CD4-positive, alpha-beta T cell (primary cell): ENCODE measurements at regions of chr16 and their contacts with region 1.

Region 1: DNA sequence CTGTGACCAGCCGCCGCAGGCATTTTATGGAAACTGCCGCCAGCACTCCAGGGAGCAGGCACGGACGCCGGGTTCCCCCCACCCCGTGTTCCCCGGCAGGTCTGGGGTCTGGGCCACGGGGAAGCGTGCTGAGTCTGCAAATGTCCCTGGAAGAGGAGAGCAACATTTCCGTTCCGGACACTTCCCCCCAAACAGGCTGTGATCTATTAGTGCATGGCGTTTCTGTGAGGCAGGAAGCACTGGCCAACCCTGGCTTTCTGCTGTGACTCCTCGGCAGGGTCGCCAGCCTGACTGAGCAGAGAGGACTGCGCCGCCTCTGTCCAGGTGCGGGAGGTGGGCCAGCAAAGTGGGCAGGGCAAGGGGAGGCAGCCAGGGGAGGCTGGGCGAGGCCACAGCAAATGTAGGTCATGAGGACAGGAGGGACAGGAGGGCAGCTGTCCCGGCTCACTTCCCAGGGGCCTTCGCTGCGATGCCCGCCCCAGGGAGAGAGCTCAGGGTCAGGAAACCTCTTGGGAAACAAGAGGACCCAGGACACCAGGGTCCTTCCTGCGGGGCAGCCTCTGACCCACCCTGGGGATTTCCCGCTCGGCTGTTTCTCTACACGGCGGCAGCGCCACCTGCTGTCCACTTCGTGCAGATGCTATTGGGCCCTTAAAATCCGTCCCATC is 9.5 kb downstream of the FOXF1 start:
- DNase-seq: peak; percentile 22 to 79 (median 38)
- ATAC-seq: peak; percentile 59
- H3K4me3 ChIP-seq: peak overlapping the region; percentile 27
- H3K4me3 Mint-ChIP-seq: no peak overlapping the region
- H3K27ac ChIP-seq: no peak overlapping the region
- H3K27ac Mint-ChIP-seq: no peak overlapping the region
- H3K4me1 ChIP-seq: peaks cover 13% of the 10 kb centered on the region
- H3K4me1 Mint-ChIP-seq: peaks cover 10% of the 10 kb centered on the region
- H3K27me3 ChIP-seq: peaks cover 52 to 64% of the 10 kb centered on the region in 2 experiments
- H3K27me3 Mint-ChIP-seq: peaks cover 54% of the 10 kb centered on the region
- CTCF ChIP-seq: peak; percentile 93

Region 2: GRCh38 chr16:86343027-86343787 is 176.6 kb before region 1 on chr16:
- CTCF ChIA-PET with region 1: no interaction called
- POLR2A ChIA-PET with region 1: no interaction called
- intact Hi-C with region 1: loop called (anchors 1 kb)
- DNase-seq: no peak
- ATAC-seq: no peak
- H3K4me3 ChIP-seq: no peak overlapping the region
- H3K4me3 Mint-ChIP-seq: no peak overlapping the region
- H3K27ac ChIP-seq: no peak overlapping the region
- H3K27ac Mint-ChIP-seq: no peak overlapping the region
- H3K4me1 ChIP-seq: no peaks in the 10 kb centered on the region
- H3K4me1 Mint-ChIP-seq: no peaks in the 10 kb centered on the region
- H3K27me3 ChIP-seq: peaks cover 14 to 21% of the 10 kb centered on the region in 2 experiments
- H3K27me3 Mint-ChIP-seq: peaks cover 76% of the 10 kb centered on the region
- CTCF ChIP-seq: no peak

Region 3: DNA sequence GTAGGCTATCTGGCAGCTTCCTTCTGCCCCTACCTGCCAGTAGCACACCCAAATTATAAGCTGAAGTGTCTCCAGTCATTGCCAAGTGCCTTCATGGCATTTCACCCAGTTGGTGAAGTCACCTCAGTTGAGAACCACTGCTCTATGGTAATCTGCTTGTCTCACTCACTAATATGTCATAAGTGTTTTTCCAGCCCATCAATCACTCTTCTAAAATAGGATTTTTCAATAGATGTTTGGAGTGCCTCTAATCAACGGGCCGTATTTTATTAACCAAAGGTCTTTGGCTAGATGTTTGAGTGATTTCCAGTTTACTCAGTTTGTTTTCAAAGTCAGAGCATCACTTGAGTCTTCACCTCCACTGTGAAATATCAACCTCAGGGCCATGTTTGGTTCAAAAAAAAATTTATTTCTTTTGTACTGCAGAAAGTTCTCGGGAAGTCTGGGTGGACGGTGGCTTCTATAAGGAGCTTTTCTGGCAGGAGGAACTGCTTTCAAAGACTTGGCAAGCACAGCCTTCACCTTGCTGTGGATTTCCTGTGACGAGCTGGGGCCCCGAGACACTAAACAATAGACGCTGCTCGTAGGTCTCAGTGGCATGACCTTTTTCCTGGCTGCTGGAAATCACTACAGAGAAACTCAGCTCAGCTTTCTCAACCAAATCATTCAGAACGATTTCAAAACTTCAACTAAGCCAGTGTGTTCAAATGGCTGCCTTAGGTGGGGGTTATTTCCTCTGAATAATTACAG is 104.6 kb before region 1 on chr16:
- CTCF ChIA-PET with region 1: no interaction called
- POLR2A ChIA-PET with region 1: no interaction called
- intact Hi-C with region 1: no loop called
- DNase-seq: peak in 1 of 14 experiments; percentile 5
- ATAC-seq: no peak
- H3K4me3 ChIP-seq: no peak overlapping the region
- H3K4me3 Mint-ChIP-seq: no peak overlapping the region
- H3K27ac ChIP-seq: no peak overlapping the region
- H3K27ac Mint-ChIP-seq: no peak overlapping the region
- H3K4me1 ChIP-seq: no peaks in the 10 kb centered on the region
- H3K4me1 Mint-ChIP-seq: no peaks in the 10 kb centered on the region
- H3K27me3 ChIP-seq: peaks cover 0 to 5% of the 10 kb centered on the region in 2 experiments
- H3K27me3 Mint-ChIP-seq: peaks cover 13% of the 10 kb centered on the region
- CTCF ChIP-seq: no peak

Region 4: GRCh38 chr16:86491256-86492023 is 28.3 kb before region 1 on chr16:
- CTCF ChIA-PET with region 1: no interaction called
- POLR2A ChIA-PET with region 1: no interaction called
- intact Hi-C with region 1: no loop called
- DNase-seq: no peak
- ATAC-seq: no peak
- H3K4me3 ChIP-seq: no peak overlapping the region
- H3K4me3 Mint-ChIP-seq: no peak overlapping the region
- H3K27ac ChIP-seq: no peak overlapping the region
- H3K27ac Mint-ChIP-seq: no peak overlapping the region
- H3K4me1 ChIP-seq: no peaks in the 10 kb centered on the region
- H3K4me1 Mint-ChIP-seq: no peaks in the 10 kb centered on the region
- H3K27me3 ChIP-seq: peaks cover 29 to 59% of the 10 kb centered on the region in 2 experiments
- H3K27me3 Mint-ChIP-seq: peaks cover 88% of the 10 kb centered on the region
- CTCF ChIP-seq: no peak